ENCODE measurements at regions of chr1 and their contacts with region 1.

Region 1: DNA sequence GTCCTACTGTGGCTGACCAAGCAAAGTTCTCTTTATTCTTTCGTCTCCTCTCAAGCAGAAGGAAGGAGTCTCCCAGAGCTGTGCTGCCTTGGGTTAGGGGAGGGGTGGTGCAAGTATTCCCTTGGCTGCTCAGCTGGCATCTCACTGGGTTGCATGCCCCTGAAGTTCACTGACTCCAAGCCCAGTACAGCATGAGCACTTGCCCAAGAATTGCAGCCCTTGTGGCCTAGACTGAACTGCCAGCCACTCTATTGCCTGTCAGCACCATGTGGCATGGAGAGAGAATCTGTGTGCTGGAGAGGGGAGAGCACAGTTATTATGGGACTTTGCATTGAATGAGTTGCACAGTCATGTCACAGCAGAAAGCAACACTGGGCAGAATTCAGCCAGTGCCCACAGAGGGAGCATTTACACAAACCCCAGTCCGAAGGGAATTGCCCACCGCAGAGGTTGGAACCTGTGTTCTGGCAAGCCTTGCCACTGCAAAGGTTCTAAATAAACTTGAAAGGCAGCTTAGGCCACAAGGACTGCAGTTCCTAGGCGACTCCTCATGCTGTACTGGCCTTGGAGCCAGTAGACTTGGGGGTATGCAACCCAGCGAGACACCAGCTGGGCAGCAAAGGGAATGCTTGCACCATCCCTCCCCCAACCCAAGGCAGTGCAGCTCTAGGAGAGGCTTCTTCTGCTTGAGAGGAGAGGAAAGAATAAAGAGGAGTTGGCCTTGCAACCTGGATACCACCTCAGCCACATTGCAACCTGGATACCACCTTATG is 28.8 kb downstream of the DR1 start:
- DNase-seq: peak in 1 of 3 donors; percentile 41
- ATAC-seq: peak in 1 of 2 donors; percentile 59
- H3K4me3 ChIP-seq: no peak overlapping the region
- H3K27ac ChIP-seq: no peak overlapping the region
- H3K4me1 ChIP-seq: no peaks in the 10 kb centered on the region
- H3K27me3 ChIP-seq: no peaks in the 10 kb centered on the region

Region 2: DNA sequence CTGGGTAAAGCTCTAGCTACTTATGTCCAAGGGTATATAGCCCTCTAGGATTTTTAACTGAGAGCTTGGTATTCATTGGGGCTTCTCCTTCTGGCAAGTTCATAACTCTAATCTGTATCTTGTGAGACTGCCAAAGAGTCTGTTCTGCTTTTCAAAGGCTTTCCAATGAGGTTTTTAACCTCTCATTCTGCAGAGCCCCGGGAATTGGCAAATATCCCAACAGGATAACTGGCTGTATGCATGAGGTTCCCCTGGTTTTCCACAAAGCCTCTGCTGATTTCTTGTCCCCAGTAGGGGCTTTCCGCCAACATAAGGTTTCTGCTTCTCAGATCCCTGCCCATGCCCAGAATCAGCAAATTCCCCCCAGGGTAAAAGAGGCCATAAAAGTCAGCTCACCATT is 501.8 kb before region 1 on chr1:
- intact Hi-C with region 1: no loop called
- DNase-seq: no peak
- ATAC-seq: no peak
- H3K4me3 ChIP-seq: no peak overlapping the region
- H3K27ac ChIP-seq: no peak overlapping the region
- H3K4me1 ChIP-seq: no peaks in the 10 kb centered on the region
- H3K27me3 ChIP-seq: no peaks in the 10 kb centered on the region

Region 3: DNA sequence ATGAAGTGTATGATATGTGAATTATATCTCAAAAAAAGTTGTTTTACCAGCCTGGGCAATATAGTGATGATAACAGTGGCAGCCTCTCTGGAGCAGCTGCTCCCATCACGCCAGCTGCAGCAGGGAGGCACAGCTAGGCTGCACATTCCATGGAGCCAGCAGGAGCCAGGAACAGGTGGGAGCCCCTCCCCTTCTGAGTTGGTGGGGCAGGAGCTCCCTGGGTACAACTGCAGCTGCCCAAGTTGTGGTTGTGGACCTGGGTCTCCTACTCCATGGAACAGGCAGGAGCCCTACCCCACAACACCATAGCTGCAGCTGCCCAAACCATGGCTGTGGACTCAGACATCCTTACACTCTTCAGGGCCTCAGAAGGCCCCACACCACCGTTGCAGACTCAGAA is 51.7 kb after region 1 on chr1:
- intact Hi-C with region 1: loop called in 1 of 4 experiments (anchors 10 kb)
- DNase-seq: no peak
- ATAC-seq: no peak
- H3K4me3 ChIP-seq: no peak overlapping the region
- H3K27ac ChIP-seq: no peak overlapping the region
- H3K4me1 ChIP-seq: no peaks in the 10 kb centered on the region
- H3K27me3 ChIP-seq: no peaks in the 10 kb centered on the region

Region 4: DNA sequence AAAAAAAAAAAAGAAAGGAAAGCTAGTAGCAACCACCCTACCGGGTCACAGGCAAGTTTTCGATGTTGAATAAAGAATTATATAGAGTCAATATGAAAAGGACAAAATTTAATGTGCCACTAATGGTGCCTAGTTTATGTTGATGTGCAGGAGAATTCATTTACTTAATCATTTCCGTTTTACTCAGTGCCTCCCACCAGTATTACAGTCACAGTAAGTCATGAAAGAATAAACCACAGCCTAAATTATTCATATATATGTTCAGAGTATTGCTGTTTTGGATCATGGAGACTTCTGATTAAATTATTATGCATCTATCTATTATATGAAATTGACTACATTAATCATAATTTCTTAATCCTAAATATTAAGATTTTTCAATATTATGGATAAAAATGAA is 108.7 kb after region 1 on chr1:
- intact Hi-C with region 1: no loop called
- DNase-seq: no peak
- ATAC-seq: no peak
- H3K4me3 ChIP-seq: no peak overlapping the region
- H3K27ac ChIP-seq: no peak overlapping the region
- H3K4me1 ChIP-seq: no peaks in the 10 kb centered on the region
- H3K27me3 ChIP-seq: no peaks in the 10 kb centered on the region

Region 5: GRCh38 chr1:93537924-93538323 is 163.4 kb after region 1 on chr1:
- intact Hi-C with region 1: no loop called
- DNase-seq: no peak
- ATAC-seq: no peak
- H3K4me3 ChIP-seq: no peak overlapping the region
- H3K27ac ChIP-seq: no peak overlapping the region
- H3K4me1 ChIP-seq: no peaks in the 10 kb centered on the region
- H3K27me3 ChIP-seq: no peaks in the 10 kb centered on the region

Measured in right cardiac atrium (tissue), 5 donors.